Posterior vena cava (tissue), 2 donors: ENCODE measurements at regions of chr3 and their contacts with region 1.

Region 1: GRCh38 chr3:36763850-36764703 is at the start of gene DCLK3:
- DNase-seq: no peak
- total RNA-seq, gene DCLK3: 0.24 TPM in 1 of 2 donors, not detected in the other

Region 2: DNA sequence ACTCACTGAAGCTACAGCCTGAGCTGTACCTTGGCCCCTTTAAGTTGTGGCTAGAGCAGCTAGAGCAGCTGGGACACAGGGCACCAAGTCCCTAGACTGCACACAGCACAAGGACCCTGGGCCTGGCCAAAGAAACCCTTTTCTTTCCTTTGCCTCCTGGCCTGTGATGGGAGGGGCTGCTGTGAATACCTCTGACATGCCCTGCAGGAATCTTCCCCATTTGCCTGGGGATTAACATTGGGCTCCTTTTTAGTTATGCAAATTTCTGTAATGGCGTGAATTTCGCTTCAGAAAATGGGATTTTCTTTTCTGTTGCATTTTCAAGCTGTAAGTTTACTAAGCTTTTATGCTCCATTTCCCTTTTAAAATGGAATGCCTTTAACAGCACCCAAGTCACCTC is 1735.9 kb before region 1 on chr3:
- intact Hi-C with region 1: loop called in 1 of 2 experiments (anchors 5 kb)
- DNase-seq: no peak

Region 3: DNA sequence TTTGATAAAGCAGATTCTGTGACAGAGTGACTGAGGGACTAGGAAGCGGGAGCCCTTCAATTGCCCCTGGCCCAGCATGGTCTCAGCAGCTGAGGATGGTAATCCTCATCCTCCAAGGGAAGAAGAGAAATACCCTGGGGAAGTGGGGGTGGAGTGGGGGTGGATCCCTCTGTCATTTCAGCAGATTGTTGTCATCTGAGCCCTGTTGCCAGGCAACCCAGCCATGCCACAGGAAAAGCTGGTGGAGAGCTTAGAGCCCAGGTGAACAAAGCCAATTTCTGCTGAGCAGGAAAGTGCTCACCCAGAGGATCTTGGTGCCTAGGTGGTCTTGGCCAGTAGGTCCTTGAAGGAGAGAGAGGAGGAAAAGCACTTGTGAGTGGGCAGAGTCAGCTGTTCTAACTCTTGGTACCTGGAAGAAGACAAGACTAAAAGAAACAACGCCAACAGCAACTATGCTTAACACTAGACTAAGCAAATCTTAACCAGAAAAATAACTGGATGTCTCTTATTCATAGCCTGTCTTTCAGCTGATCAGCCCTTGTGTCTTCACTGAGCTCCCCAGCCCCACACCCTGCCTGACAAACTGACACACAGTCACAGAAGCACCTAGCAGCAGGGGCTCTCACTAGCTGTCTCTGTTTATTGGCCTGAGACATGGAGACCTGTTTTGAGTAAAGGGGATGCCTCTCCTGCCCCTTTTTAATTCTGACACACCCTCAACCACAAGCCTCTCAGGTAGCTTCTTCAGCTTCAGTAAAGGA is 40.4 kb after region 1 on chr3:
- intact Hi-C with region 1: no loop called
- DNase-seq: no peak

Region 4: DNA sequence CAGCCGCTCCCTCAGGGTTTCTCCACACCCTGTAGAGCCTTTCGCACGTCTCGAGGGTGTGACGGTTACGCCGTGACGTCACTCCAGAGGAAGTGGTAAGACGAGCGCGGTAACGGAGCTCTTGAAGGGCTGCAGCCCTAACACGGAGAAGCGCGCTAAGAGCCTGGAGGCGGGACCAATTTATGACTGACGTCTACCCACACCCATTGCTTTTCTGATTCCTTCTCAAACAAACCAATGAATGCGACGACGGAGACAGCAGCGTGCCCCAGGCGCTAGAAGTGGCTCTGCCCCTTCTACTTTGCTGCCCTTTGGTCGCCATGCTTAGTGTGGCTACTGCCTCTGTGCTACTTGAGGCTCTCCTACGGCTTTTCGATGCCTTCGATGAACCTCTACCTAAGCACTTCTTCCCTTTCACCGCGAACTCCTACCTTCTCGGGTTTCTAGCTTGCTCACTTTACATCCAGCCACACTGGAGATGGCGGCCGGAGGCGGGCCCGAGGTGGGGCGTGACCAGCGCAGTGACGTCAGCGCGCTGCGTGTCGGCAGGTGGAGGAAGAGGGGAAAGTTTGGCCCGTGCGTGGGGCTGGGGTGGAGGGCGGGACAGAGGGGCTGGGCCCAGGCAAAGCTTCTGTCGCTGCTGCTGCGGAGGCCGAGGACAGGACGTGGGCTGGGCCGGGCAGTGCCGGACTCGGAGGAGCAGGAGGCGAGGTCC is 1401.0 kb after region 1 on chr3 and contains the start of gene OXSR1:
- intact Hi-C with region 1: no loop called
- DNase-seq: peak; percentile 100
- total RNA-seq, gene OXSR1: 30.4 to 52.3 TPM